Psoas muscle (tissue), 8 donors: ENCODE measurements at regions of chr12 and their contacts with region 1.

Region 1: GRCh38 chr12:31238764-31239387 is 87.1 kb downstream of the SINHCAF start:
- DNase-seq: peak; percentile 44 to 64
- ATAC-seq: peak; percentile 62 to 79 (median 71)
- H3K4me3 ChIP-seq: no peak overlapping the region
- H3K27ac ChIP-seq: no peak overlapping the region
- H3K4me1 ChIP-seq: no peaks in the 10 kb centered on the region
- H3K27me3 ChIP-seq: no peaks in the 10 kb centered on the region
- CTCF ChIP-seq: peak; percentile 63

Region 2: GRCh38 chr12:31117203-31118011 is 121.5 kb before region 1 on chr12:
- intact Hi-C with region 1: loop called in 1 of 2 experiments (anchors 5 kb)
- DNase-seq: peak in 1 of 2 donors; percentile 55
- ATAC-seq: peak; percentile 53 to 88 (median 81)
- H3K4me3 ChIP-seq: peak overlapping the region; percentile 59
- H3K27ac ChIP-seq: no peak overlapping the region
- H3K4me1 ChIP-seq: peaks cover 9% of the 10 kb centered on the region
- H3K27me3 ChIP-seq: peaks cover 0 to 23% (median 22%) of the 10 kb centered on the region in 3 donors
- CTCF ChIP-seq: peak; percentile 41

Region 3: DNA sequence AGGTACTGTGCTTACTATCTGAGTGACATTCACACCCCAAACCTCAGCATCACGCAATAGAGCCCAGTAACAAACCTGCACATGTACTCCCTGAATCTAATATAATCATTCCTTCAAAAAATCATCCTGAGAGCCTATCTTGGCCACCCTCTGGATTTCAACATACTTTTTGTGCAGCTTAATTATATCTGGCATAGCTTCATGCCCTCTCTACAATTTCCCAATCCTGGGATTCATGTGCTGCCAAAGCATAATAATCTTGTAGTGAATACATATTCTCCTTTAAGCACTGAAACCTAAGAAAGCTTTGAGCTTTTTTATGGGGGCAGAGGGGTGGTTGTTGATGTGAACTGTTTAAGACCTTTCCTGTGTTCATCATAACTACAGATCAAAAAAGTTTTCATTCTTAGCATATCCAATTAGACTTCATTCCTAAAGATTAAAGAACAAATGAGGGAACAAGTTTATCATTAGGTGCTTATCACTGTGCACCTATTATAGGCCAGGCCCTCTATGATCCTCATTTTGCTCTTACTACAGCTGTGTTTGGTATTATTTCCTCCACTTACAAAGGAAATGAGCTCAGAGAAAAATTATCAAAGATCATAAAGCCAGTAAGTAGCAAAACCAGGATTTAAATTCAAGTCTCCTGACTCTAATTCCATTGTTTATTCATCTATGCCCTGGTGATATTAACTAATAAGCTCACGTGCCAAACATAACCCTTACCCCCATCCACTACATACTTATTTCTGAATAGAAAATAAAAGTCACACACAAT is 35.8 kb after region 1 on chr12:
- intact Hi-C with region 1: no loop called
- DNase-seq: no peak
- ATAC-seq: no peak
- H3K4me3 ChIP-seq: no peak overlapping the region
- H3K27ac ChIP-seq: no peak overlapping the region
- H3K4me1 ChIP-seq: no peaks in the 10 kb centered on the region
- H3K27me3 ChIP-seq: no peaks in the 10 kb centered on the region
- CTCF ChIP-seq: no peak